ENCODE measurements at regions of chr1 and their contacts with region 1.

Region 1: DNA sequence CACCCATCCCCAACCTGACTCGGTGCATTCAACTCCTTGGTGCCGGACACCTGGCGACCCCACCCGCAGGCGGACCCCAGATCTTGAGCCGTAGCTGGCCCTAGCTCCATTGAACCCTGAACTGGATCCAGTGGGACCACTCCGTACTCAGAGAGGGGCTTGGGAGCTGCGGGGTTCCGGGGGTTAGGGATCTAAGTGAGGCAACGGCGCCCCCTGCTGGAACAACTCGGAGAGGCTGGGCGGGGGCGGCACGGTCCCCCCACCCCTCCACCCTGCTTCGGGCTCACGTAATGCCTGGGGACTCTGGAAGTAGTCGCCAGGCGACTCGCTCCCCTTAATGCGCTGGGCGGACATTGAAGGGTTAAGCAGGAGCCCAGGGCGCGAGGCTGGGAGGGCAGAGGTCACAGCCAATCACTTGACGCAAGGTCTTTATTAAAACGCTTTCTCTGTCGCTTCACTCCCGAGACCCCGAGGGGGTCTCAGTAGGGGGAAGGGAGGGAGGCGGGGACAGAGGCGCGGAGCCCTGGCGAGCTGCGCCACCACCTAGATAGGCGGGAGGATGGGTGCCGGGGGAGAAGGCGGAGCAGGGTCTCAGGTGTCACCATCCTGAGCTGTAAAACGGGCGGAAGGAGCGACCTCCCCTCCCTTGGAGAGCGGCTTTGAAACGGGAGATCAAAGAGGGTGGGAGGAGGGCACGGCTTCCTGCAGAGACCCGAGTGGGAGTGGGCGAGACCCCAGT is 704 bp upstream of the CRABP2 start:
- DNase-seq: peak; percentile 85
- CTCF ChIP-seq: peak; percentile 92

Region 2: GRCh38 chr1:156860113-156860627 is 154.1 kb after region 1 on chr1:
- in situ Hi-C with region 1: loop called (anchors 25 kb)
- DNase-seq: peak; percentile 91
- CTCF ChIP-seq: peak; percentile 87